Activated CD4-positive, alpha-beta T cell treated with anti-CD3 and anti-CD28 coated beads, Interleukin-2, amount 10 ng/mL, durations not matched to agents 24 days and 14 days (primary cell): ENCODE measurements at regions of chr1 and their contacts with region 1.

Region 1: DNA sequence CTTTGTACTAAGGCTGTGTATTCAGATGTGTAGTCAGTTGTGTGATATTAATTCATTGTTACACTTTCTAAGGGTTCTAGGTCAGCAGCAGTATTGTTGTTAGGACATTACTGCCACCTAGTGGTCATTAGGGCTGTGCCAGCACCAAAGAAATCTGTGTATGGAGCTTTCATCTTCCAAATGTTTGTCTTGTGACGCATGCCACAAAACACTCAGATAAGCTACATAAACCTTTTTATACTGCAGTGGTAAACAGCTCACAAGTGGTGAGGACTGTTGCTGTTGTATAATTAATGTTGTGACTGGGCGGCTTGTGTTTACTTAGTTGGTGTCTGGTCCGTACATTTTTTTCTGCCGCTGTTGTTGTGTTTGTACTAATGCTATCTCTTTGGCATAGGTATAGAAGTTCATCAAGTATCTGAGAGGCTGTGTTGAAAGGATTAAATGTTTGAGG is 51.7 kb downstream of the S1PR1 start:
- DNase-seq: peak; percentile 89
- H3K4me3 Mint-ChIP-seq: no peak overlapping the region
- H3K27ac Mint-ChIP-seq: no peak overlapping the region
- H3K4me1 Mint-ChIP-seq: peaks cover 72% of the 10 kb centered on the region
- H3K27me3 Mint-ChIP-seq: peaks cover under 1% of the 10 kb centered on the region

Region 2: GRCh38 chr1:100883963-100884362 is 404.6 kb before region 1 on chr1:
- intact Hi-C with region 1: no loop called
- DNase-seq: no peak
- H3K4me3 Mint-ChIP-seq: no peak overlapping the region
- H3K27ac Mint-ChIP-seq: no peak overlapping the region
- H3K4me1 Mint-ChIP-seq: no peaks in the 10 kb centered on the region
- H3K27me3 Mint-ChIP-seq: peaks cover 1% of the 10 kb centered on the region

Region 3: GRCh38 chr1:100895540-100896483 is 392.7 kb before region 1 on chr1 and contains the start of gene SLC30A7:
- intact Hi-C with region 1: loop called (anchors 1 kb)
- DNase-seq: peak; percentile 99
- H3K4me3 Mint-ChIP-seq: peak within 1 kb of the TSS; percentile 100
- H3K27ac Mint-ChIP-seq: peak within 1 kb of the TSS; percentile 100
- H3K4me1 Mint-ChIP-seq: peaks cover 36% of the 10 kb centered on the region
- H3K27me3 Mint-ChIP-seq: no peaks in the 10 kb centered on the region
- total RNA-seq, gene SLC30A7: 40.8 and 41.0 TPM in 2 replicates

Region 4: DNA sequence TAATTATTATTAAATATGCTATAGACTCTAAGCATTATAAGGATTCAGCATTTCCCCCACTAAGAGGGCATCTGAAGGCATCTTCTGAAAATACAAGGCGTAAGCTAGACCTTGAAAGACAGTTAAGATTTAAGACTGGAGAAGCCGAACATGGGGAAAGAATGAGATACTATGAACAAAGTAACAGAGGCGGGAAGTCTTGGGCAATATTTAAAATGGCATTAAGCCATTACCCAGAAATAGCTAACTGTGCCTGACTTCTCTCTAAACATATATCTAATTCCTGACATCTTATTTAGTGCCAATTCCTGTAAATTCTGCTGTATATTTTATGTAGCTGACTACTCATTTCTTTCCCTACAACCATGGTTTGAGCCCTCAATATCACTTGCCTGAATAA is 283.8 kb before region 1 on chr1:
- intact Hi-C with region 1: loop called (anchors 1 kb)
- DNase-seq: no peak
- H3K4me3 Mint-ChIP-seq: no peak overlapping the region
- H3K27ac Mint-ChIP-seq: no peak overlapping the region
- H3K4me1 Mint-ChIP-seq: peaks cover 33% of the 10 kb centered on the region
- H3K27me3 Mint-ChIP-seq: no peaks in the 10 kb centered on the region

Region 5: DNA sequence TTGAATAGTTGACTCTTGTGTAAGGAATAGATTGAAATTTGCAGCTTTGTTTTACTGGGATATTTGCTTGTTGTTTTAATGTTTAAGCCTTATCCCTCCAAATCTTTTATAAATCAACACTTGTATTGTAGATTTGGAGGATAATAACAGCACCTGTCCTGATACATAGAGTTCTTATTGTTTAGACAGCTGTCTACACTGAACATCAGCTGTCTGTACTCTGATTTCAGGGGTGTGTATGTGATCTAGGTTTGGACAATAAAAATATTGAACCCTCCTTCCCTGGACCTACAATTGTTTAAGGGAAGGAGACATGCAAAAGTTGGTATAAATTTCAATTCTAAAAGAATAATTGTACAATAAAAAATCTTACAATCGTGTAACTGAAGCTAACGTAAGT is 214.7 kb before region 1 on chr1:
- intact Hi-C with region 1: no loop called
- DNase-seq: no peak
- H3K4me3 Mint-ChIP-seq: no peak overlapping the region
- H3K27ac Mint-ChIP-seq: no peak overlapping the region
- H3K4me1 Mint-ChIP-seq: peaks cover 17% of the 10 kb centered on the region
- H3K27me3 Mint-ChIP-seq: no peaks in the 10 kb centered on the region

Region 6: DNA sequence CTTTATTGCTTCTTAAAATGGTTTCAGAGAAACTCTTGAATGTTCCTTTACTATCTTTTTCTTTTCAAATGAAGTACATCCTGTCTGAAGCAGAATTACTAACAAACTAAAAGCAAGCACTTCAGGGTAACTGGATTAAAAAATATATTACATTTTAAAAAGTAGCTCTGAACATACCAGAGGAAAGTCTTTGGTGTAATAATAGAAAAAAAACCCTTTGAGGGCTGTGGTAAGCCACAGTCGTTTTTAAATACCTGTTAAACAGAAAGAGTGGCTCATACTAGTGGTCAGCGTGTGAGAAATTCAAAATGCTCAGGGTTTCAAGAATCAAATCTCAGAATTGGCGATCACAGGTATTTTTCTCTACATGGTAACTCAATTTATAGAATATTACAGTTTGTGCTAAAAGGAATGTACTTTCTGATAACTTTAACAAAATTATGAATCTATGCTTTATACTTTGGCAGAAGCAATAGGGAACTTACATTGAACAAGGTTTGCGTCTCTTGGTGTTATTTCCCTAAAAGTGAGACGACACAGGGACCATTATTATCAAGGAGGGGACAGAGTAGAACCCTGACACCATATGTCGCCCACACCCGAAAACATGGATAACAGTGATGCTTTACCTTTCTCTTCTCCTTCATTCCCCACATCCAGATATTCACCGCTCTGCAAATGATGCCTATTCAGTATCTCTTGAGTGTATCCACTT is 165.9 kb before region 1 on chr1:
- intact Hi-C with region 1: loop called (anchors 5 kb)
- DNase-seq: no peak
- H3K4me3 Mint-ChIP-seq: peak overlapping the region; percentile 41
- H3K27ac Mint-ChIP-seq: peak overlapping the region; percentile 52
- H3K4me1 Mint-ChIP-seq: peaks cover 34% of the 10 kb centered on the region
- H3K27me3 Mint-ChIP-seq: no peaks in the 10 kb centered on the region

Region 7: GRCh38 chr1:101203820-101204540 is 84.5 kb before region 1 on chr1:
- intact Hi-C with region 1: loop called (anchors 1 kb)
- DNase-seq: no peak
- H3K4me3 Mint-ChIP-seq: no peak overlapping the region
- H3K27ac Mint-ChIP-seq: no peak overlapping the region
- H3K4me1 Mint-ChIP-seq: peaks cover 25% of the 10 kb centered on the region
- H3K27me3 Mint-ChIP-seq: no peaks in the 10 kb centered on the region

Region 8: GRCh38 chr1:101262630-101263348 is 25.7 kb before region 1 on chr1:
- intact Hi-C with region 1: loop called (anchors 2 kb)
- DNase-seq: peak; percentile 83
- H3K4me3 Mint-ChIP-seq: peak overlapping the region; percentile 52
- H3K27ac Mint-ChIP-seq: peak overlapping the region; percentile 17
- H3K4me1 Mint-ChIP-seq: peaks cover 61% of the 10 kb centered on the region
- H3K27me3 Mint-ChIP-seq: no peaks in the 10 kb centered on the region

Region 9: GRCh38 chr1:101364370-101365120 is 76.0 kb after region 1 on chr1:
- intact Hi-C with region 1: no loop called
- DNase-seq: no peak
- H3K4me3 Mint-ChIP-seq: no peak overlapping the region
- H3K27ac Mint-ChIP-seq: no peak overlapping the region
- H3K4me1 Mint-ChIP-seq: peaks cover 2% of the 10 kb centered on the region
- H3K27me3 Mint-ChIP-seq: peaks cover 17% of the 10 kb centered on the region